ENCODE measurements at regions of chr4 and their contacts with region 1.

Region 1: DNA sequence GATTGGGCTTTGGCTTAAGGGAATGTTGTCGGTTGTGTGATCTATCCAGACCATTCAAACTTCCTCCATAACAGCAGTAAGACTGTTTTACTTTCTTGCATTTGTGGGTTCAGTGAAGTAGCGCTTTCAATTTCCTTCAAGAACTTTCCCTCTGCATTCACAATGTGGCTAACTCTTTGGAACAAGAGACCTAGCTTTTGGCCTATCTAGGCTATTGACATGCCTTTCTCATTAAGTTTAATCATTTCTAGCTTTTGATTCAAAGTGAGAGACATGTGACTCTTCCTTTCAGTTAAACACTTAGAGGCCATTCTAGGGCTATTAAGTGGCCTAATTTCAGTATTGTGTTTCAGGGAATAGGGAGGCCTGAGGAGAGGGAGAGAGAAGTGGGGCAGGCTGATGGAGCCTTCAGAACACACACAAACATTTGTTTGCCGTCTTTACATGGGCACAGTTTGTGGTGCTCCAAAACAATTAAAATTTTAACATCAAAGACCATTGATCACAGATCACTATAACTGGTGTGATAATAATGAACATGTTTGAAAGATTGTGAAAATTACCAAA is 34.1 kb downstream of the ADH5 start:
- DNase-seq: no peak
- H3K4me3 ChIP-seq: no peak overlapping the region
- H3K27ac ChIP-seq: no peak overlapping the region
- H3K4me1 ChIP-seq: peaks cover 8% of the 10 kb centered on the region
- H3K27me3 ChIP-seq: no peaks in the 10 kb centered on the region
- CTCF ChIP-seq: no peak
- POLR2A ChIP-seq: no peak

Region 2: GRCh38 chr4:98113012-98113411 is 941.5 kb before region 1 on chr4:
- CTCF ChIA-PET with region 1: interaction called, 12 read pairs
- POLR2A ChIA-PET with region 1: no interaction called
- dilution Hi-C with region 1: no loop called
- intact Hi-C with region 1: no loop called
- DNase-seq: peak; percentile 7
- H3K4me3 ChIP-seq: no peak overlapping the region
- H3K27ac ChIP-seq: no peak overlapping the region
- H3K4me1 ChIP-seq: no peaks in the 10 kb centered on the region
- H3K27me3 ChIP-seq: peaks cover 0 to 2% of the 10 kb centered on the region in 2 experiments
- CTCF ChIP-seq: peak in 1 of 2 donors; percentile 9
- POLR2A ChIP-seq: no peak

Region 3: DNA sequence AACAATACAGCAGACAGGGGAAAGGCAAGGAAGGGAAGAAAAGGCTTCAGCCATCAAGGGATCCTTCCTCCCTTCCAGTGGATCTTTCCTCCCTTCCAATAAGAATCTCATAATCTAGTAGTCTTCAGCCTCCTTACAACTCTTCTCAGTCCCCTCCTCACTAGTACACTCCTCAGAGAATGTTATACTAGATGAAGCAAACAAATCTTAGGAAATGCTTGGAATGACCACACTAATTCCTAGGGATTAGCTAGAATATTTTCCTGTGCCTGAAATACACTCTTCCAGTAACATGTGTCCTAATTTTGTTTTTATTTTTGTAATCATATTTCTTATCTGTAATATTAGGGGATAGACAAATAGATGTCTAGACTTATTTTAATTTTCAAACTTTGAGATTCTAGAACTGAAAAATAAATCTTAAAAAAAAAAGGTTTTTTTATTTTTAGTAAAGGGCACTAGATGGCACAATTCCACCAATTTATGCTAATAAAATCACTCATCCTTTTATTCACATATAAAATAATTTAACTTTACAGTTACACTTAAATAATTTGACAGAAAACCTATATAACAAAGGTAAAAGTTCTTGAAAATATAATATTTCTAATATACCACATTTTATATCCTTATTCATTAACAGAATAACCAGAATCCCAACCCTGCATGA is 904.3 kb before region 1 on chr4:
- CTCF ChIA-PET with region 1: interaction called, 26 read pairs
- POLR2A ChIA-PET with region 1: no interaction called
- dilution Hi-C with region 1: no loop called
- intact Hi-C with region 1: loop called (anchors 5 kb)
- DNase-seq: no peak
- H3K4me3 ChIP-seq: no peak overlapping the region
- H3K27ac ChIP-seq: no peak overlapping the region
- H3K4me1 ChIP-seq: peaks cover 6% of the 10 kb centered on the region
- H3K27me3 ChIP-seq: peaks cover 0 to 3% of the 10 kb centered on the region in 2 experiments
- CTCF ChIP-seq: no peak
- POLR2A ChIP-seq: no peak

Region 4: DNA sequence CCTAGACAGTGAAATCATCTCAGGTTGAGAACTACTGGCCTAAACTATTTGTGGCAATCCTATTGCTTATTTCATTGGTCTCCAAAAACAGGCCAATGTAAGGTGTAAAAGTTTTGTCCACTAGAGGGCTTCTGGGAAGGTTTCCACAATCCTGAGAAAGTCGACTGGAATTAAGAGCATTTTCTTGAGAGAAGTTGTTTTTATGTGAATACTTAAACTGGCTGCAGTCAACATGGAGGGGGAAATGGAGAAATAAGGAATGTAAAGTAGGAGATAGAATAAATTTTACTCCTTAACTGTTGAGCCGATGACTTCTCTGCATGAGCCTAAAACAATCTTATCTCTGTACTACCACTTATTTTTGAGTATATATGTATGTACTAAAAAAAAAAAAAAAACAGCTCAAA is 114.6 kb before region 1 on chr4:
- CTCF ChIA-PET with region 1: interaction called, 21 read pairs
- POLR2A ChIA-PET with region 1: no interaction called
- dilution Hi-C with region 1: no loop called
- intact Hi-C with region 1: no loop called
- DNase-seq: peak; percentile 81
- H3K4me3 ChIP-seq: no peak overlapping the region
- H3K27ac ChIP-seq: no peak overlapping the region
- H3K4me1 ChIP-seq: peaks cover 3% of the 10 kb centered on the region
- H3K27me3 ChIP-seq: no peaks in the 10 kb centered on the region
- CTCF ChIP-seq: peak; percentile 58 to 64
- POLR2A ChIP-seq: no peak

Region 5: GRCh38 chr4:99029018-99029735 is 25.3 kb before region 1 on chr4:
- CTCF ChIA-PET with region 1: interaction called, 10 read pairs
- POLR2A ChIA-PET with region 1: no interaction called
- dilution Hi-C with region 1: no loop called
- intact Hi-C with region 1: no loop called
- DNase-seq: no peak
- H3K4me3 ChIP-seq: no peak overlapping the region
- H3K27ac ChIP-seq: no peak overlapping the region
- H3K4me1 ChIP-seq: no peaks in the 10 kb centered on the region
- H3K27me3 ChIP-seq: no peaks in the 10 kb centered on the region
- CTCF ChIP-seq: no peak
- POLR2A ChIP-seq: no peak

Region 6: DNA sequence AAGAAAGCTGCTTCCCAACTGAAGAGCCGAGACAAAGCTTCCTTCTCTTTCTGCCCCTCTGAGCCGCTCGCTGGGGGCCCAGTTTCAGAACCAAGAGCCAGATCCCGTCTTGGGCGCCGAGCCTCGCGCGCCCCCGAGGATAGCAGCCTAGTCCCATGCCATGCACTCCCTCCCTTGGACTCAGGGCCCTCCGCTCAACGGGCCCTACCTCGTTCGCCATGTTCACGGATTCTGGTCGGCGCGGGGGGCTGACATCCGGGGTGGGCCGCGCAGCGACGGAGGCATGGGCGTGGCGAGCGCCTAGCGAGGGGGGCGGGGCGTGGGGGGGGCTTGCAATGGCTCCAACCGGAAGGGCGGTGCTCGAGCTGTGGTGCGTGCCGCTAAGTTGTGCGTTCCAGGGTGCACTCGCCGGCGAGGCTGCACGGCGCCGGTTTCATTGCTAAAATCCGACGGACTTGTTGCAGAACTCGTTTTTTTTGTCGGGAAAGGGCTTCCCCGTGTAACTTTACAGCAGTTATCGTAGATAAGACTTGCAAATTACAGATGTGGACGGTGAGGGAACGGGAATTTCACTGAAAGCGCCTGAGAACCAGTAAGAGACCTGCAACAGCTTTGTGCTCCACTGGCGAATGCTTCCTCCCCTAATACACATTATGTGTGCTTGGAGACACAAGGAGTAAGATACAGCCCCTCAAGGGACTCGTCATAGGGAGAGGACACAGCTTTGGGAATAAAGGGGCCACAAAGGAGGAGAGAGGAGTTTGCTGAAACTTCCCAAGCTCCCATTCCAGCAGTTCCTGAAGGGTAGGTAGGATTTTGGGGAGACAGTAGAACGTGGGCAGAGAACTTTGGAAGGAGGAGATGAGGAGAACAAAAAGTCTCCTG is 34.2 kb after region 1 on chr4 and contains the start of gene ADH5:
- CTCF ChIA-PET with region 1: interaction called, 11 read pairs
- POLR2A ChIA-PET with region 1: no interaction called
- dilution Hi-C with region 1: no loop called
- intact Hi-C with region 1: no loop called
- DNase-seq: peak; percentile 72
- H3K4me3 ChIP-seq: peak within 1 kb of the TSS; percentile 80 to 98 (median 82)
- H3K27ac ChIP-seq: peak within 1 kb of the TSS; percentile 66
- H3K4me1 ChIP-seq: peaks cover 8% of the 10 kb centered on the region
- H3K27me3 ChIP-seq: no peaks in the 10 kb centered on the region
- CTCF ChIP-seq: no peak
- POLR2A ChIP-seq: peak; percentile 91
- total RNA-seq, gene ADH5: 101 and 103 TPM in 2 replicates

Region 7: GRCh38 chr4:99221980-99222379 is 167.5 kb after region 1 on chr4:
- CTCF ChIA-PET with region 1: no interaction called
- POLR2A ChIA-PET with region 1: no interaction called
- dilution Hi-C with region 1: no loop called
- intact Hi-C with region 1: no loop called
- DNase-seq: no peak
- H3K4me3 ChIP-seq: no peak overlapping the region
- H3K27ac ChIP-seq: no peak overlapping the region
- H3K4me1 ChIP-seq: no peaks in the 10 kb centered on the region
- H3K27me3 ChIP-seq: no peaks in the 10 kb centered on the region
- CTCF ChIP-seq: no peak
- POLR2A ChIP-seq: no peak

Region 8: GRCh38 chr4:99615170-99615820 is 560.8 kb after region 1 on chr4:
- CTCF ChIA-PET with region 1: no interaction called
- POLR2A ChIA-PET with region 1: no interaction called
- dilution Hi-C with region 1: no loop called
- intact Hi-C with region 1: no loop called
- DNase-seq: no peak
- H3K4me3 ChIP-seq: no peak overlapping the region
- H3K27ac ChIP-seq: no peak overlapping the region
- H3K4me1 ChIP-seq: no peaks in the 10 kb centered on the region
- H3K27me3 ChIP-seq: peaks cover 0 to 2% of the 10 kb centered on the region in 2 experiments
- CTCF ChIP-seq: no peak
- POLR2A ChIP-seq: no peak